ENCODE measurements at regions of chr1 and their contacts with region 1.

Region 1: GRCh38 chr1:112390775-112391602 is 5.0 kb upstream of the CTTNBP2NL start:
- DNase-seq: peak; percentile 28
- H3K4me3 ChIP-seq: peak overlapping the region; percentile 22 to 64 (median 47)
- H3K27ac ChIP-seq: peak overlapping the region; percentile 83 to 98 (median 95)
- H3K4me1 ChIP-seq: peaks cover 27 to 56% (median 29%) of the 10 kb centered on the region in 3 donors
- H3K27me3 ChIP-seq: no peaks in the 10 kb centered on the region
- CTCF ChIP-seq: peak; percentile 86 to 98 (median 96)
- POLR2A ChIP-seq: peak in 1 of 4 donors; percentile 12

Region 2: DNA sequence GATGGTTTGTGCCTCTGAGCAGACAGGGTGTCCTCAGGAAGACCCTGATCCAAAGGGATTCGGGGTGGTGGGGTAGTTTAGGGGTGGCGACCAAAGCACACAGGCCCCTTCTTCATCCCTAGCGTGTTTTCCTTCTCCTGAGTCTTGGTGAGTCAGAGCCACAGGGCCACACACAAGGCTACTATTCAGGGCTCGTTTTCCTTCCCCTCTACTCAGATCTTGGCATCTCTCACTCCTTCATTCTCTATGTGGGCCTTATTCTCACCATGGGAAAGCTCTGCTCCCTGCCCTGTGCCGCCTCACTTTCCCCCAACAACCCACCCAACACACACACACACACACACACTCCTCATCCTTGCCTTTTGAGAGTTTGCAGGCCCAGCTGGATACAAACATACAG is 74.1 kb after region 1 on chr1:
- intact Hi-C with region 1: loop called (anchors 2 kb)
- DNase-seq: no peak
- H3K4me3 ChIP-seq: no peak overlapping the region
- H3K27ac ChIP-seq: peak overlapping the region; percentile 74 to 92 (median 88)
- H3K4me1 ChIP-seq: peaks cover 31 to 74% (median 50%) of the 10 kb centered on the region in 3 donors
- H3K27me3 ChIP-seq: no peaks in the 10 kb centered on the region
- CTCF ChIP-seq: no peak
- POLR2A ChIP-seq: no peak

Measured in esophagus squamous epithelium (tissue), 5 donors.